Dorsolateral prefrontal cortex (tissue), 120 donors: ENCODE measurements at regions of chr17 and their contacts with region 1.

Region 1: GRCh38 chr17:59155439-59156182 is at the start of gene PRR11:
- DNase-seq: peak; percentile 90 to 99 (median 98)
- H3K4me3 ChIP-seq: peak within 1 kb of the TSS; percentile 56 to 95 (median 80)
- H3K27ac ChIP-seq: peak within 1 kb of the TSS; percentile 32 to 96 (median 89)
- H3K27me3 ChIP-seq: no peaks in the 10 kb centered on the region
- CTCF ChIP-seq: peak in 4 of 56 donors; percentile 2 to 31 (median 18)
- total RNA-seq, gene PRR11: 1.0 to 7.2 (median 2.9) TPM

Region 2: DNA sequence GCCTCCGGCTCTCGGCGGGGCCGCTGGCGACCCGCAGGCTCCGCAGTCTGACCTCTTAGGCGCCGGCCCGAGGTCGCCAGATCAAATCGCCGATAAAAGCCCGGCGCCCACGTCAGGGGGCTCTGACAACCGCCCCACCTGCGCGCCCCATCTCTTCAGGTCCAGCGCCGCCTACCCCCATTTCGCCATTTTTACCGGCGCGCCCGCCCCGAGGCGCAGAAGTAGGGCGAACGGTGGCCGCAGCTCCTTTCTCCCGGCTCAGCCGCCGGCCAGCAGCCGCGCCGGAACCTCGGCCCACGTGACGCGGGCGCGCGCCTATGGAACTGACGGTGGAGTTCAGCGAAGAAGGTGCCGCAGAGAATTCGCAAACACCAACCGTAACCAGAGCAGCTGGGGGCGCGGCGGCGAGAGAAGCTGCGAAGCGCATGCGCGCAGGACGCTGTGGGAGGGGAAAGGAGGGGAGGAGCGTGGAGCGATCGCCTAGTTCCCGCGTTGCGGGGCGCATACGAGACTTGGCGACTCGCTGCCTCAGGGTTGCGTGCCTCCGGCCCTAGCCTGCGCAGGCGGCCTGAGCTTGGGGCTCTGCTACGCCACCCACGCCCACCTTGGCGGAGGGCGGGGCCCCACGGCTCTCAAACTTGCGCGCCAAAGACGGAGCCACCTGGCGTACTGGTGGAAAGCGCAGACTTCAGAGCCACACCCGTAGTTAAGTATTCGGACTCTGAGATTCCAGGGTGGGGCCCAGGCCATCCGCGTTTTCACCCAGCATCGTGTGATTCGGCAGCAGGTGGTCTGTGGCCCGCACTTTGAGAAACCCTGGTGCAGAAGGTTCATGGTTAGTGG is 48.9 kb before region 1 on chr17 and contains the start of gene TRIM37:
- intact Hi-C with region 1: loop called (anchors 1 to 2 kb)
- DNase-seq: peak; percentile 89 to 97 (median 96)
- H3K4me3 ChIP-seq: peak within 1 kb of the TSS; percentile 63 to 100 (median 95)
- H3K27ac ChIP-seq: peak within 1 kb of the TSS; percentile 44 to 98 (median 93)
- H3K27me3 ChIP-seq: no peaks in the 10 kb centered on the region
- CTCF ChIP-seq: peak in 45 of 56 donors; percentile 6 to 66 (median 42)
- total RNA-seq, gene TRIM37: 46.6 to 163 (median 113) TPM

Region 3: DNA sequence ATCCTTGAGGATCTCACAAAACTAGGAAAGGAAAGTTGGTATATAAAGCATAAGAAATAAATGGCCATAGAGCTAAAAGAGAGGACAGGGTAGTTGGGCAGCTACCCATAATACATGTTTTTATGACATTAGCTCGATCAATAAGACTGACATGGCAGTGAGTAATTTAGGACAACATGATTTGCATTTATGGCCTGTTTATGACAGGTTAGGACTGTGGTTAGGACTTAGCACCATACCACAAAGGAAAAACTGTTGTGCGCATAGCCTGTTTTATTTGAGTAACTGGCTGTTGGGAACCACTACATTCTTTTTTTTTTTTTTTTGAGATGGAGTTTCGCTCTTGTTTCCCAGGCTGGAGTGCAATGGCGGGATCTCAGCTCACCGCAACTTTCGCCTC is 30.9 kb before region 1 on chr17:
- intact Hi-C with region 1: no loop called
- DNase-seq: no peak
- H3K4me3 ChIP-seq: no peak overlapping the region
- H3K27ac ChIP-seq: no peak overlapping the region
- H3K27me3 ChIP-seq: no peaks in the 10 kb centered on the region
- CTCF ChIP-seq: no peak